HCT116 (cell line): ENCODE measurements at regions of chr14 and their contacts with region 1.

Region 1: GRCh38 chr14:58501214-58501816 is 73.8 kb downstream of the KIAA0586 start:
- DNase-seq: peak; percentile 54
- ATAC-seq: peak; percentile 73
- H3K4me3 ChIP-seq: no peak overlapping the region
- H3K27ac ChIP-seq: no peak overlapping the region
- H3K4me1 ChIP-seq: no peaks in the 10 kb centered on the region
- H3K27me3 ChIP-seq: no peaks in the 10 kb centered on the region
- CTCF ChIP-seq: peak; percentile 59 to 90 (median 80); a peak in 5 of 6 replicates
- POLR2A ChIP-seq: no peak
- RAD21 ChIP-seq: peak; percentile 80

Region 2: DNA sequence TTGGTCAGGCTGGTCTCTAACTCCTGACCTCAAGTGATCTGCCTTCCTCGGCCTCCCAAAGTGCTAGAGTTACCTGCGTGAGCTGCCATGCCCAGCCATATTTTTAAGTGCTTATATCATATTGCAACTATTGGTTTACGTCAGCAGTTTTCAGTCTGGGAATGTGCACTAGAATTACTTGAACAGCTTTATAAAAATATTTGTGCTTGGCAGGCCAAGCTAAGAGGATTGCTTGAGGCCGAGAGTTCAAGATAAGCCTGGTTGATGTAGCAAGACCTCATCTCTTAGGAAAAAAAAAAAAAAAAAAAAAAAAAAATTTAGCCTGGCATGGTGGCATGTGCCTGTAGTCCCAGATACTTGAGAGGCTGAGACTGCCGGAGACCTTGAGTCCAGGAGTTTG is 56.7 kb before region 1 on chr14:
- CTCF ChIA-PET with region 1: no interaction called
- POLR2A ChIA-PET with region 1: no interaction called
- RAD21 ChIA-PET with region 1: no interaction called
- intact Hi-C with region 1: no loop called
- DNase-seq: no peak
- ATAC-seq: no peak
- H3K4me3 ChIP-seq: no peak overlapping the region
- H3K27ac ChIP-seq: no peak overlapping the region
- H3K4me1 ChIP-seq: no peaks in the 10 kb centered on the region
- H3K27me3 ChIP-seq: no peaks in the 10 kb centered on the region
- CTCF ChIP-seq: no peak
- POLR2A ChIP-seq: no peak
- RAD21 ChIP-seq: no peak

Region 3: GRCh38 chr14:58513272-58513671 is 12.0 kb after region 1 on chr14:
- CTCF ChIA-PET with region 1: interaction called, 10 read pairs
- POLR2A ChIA-PET with region 1: no interaction called
- RAD21 ChIA-PET with region 1: no interaction called
- intact Hi-C with region 1: no loop called
- DNase-seq: no peak
- ATAC-seq: no peak
- H3K4me3 ChIP-seq: no peak overlapping the region
- H3K27ac ChIP-seq: no peak overlapping the region
- H3K4me1 ChIP-seq: no peaks in the 10 kb centered on the region
- H3K27me3 ChIP-seq: no peaks in the 10 kb centered on the region
- CTCF ChIP-seq: no peak
- POLR2A ChIP-seq: no peak
- RAD21 ChIP-seq: no peak

Region 4: DNA sequence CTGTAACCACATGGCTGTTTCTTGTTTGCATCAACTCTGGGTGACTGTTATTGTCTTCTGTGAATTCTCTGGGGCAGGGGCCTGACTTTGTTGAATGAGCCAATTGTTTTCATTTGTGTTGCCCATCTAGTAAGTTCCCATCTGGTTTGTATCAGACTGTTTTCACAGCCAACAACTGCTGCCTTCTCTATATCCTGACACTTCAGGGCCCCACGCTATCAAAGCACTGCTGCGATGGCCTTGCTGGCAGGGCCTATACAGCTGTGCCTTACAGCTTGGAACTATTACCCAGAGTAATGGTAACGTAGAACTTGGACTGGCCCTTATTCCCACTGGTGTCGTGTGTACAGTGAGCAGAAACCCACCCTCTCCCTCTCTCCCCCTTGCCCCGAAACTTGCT is 32.1 kb after region 1 on chr14:
- CTCF ChIA-PET with region 1: no interaction called
- POLR2A ChIA-PET with region 1: no interaction called
- RAD21 ChIA-PET with region 1: no interaction called
- intact Hi-C with region 1: no loop called
- DNase-seq: no peak
- ATAC-seq: no peak
- H3K4me3 ChIP-seq: no peak overlapping the region
- H3K27ac ChIP-seq: no peak overlapping the region
- H3K4me1 ChIP-seq: no peaks in the 10 kb centered on the region
- H3K27me3 ChIP-seq: no peaks in the 10 kb centered on the region
- CTCF ChIP-seq: no peak
- POLR2A ChIP-seq: no peak
- RAD21 ChIP-seq: no peak

Region 5: DNA sequence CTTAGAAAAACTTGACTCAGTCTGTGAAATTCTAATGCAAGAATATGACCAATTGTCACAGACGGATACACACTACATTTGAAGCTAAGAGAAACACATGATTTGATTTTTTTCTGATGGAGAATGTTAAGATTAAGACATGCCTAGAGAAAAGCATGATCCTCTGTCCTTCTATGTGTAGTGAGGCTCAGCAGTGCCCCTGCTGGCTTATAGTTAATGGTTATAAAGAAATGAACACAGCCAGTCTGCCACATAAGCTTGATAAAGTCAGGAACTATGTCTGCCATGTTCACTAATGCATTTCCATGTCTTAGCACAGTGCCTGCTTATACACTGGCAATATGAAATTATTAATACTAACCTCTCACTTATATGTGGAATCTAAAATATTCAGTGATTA is 519.1 kb after region 1 on chr14:
- CTCF ChIA-PET with region 1: interaction called, 30 read pairs
- POLR2A ChIA-PET with region 1: no interaction called
- RAD21 ChIA-PET with region 1: interaction called in 1 of 2 experiments, 3 read pairs
- intact Hi-C with region 1: no loop called
- DNase-seq: peak; percentile 18
- ATAC-seq: peak; percentile 87
- H3K4me3 ChIP-seq: no peak overlapping the region
- H3K27ac ChIP-seq: no peak overlapping the region
- H3K4me1 ChIP-seq: no peaks in the 10 kb centered on the region
- H3K27me3 ChIP-seq: no peaks in the 10 kb centered on the region
- CTCF ChIP-seq: peak; percentile 16 to 61 (median 54); a peak in 3 of 6 replicates
- POLR2A ChIP-seq: no peak
- RAD21 ChIP-seq: peak; percentile 46

Region 6: GRCh38 chr14:59055439-59056045 is 554.2 kb after region 1 on chr14:
- CTCF ChIA-PET with region 1: interaction called, 16 read pairs
- POLR2A ChIA-PET with region 1: no interaction called
- RAD21 ChIA-PET with region 1: interaction called in 1 of 2 experiments, 5 read pairs
- intact Hi-C with region 1: loop called (anchors 1 kb)
- DNase-seq: peak; percentile 13
- ATAC-seq: peak; percentile 95
- H3K4me3 ChIP-seq: no peak overlapping the region
- H3K27ac ChIP-seq: no peak overlapping the region
- H3K4me1 ChIP-seq: no peaks in the 10 kb centered on the region
- H3K27me3 ChIP-seq: no peaks in the 10 kb centered on the region
- CTCF ChIP-seq: peak; percentile 49 to 76 (median 69); a peak in 5 of 6 replicates
- POLR2A ChIP-seq: no peak
- RAD21 ChIP-seq: peak; percentile 77

Region 7: DNA sequence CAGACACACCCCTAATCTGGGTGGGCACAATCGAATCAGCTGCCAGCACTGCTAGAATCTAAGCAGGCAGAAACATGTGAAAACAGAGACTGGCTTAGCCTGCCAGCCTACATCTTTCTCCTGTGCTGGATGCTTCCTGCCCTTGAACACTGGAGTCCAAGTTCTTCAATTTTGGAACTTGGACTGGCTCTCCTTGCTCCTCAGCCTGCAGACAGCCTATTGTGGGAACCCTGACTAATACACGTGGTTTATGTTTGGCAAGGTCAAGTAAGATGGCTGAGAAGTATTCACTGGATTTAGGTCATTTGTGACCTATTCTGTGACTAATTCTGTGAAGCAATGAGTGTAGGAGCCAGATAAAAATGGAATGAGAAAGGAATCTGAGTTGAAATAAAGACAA is 952.8 kb after region 1 on chr14:
- CTCF ChIA-PET with region 1: no interaction called
- POLR2A ChIA-PET with region 1: no interaction called
- RAD21 ChIA-PET with region 1: no interaction called
- intact Hi-C with region 1: loop called (anchors 10 kb)
- DNase-seq: no peak
- ATAC-seq: no peak
- H3K4me3 ChIP-seq: no peak overlapping the region
- H3K27ac ChIP-seq: no peak overlapping the region
- H3K4me1 ChIP-seq: no peaks in the 10 kb centered on the region
- H3K27me3 ChIP-seq: no peaks in the 10 kb centered on the region
- CTCF ChIP-seq: no peak
- POLR2A ChIP-seq: no peak
- RAD21 ChIP-seq: no peak